ENCODE measurements at regions of chr15 and their contacts with region 1.

Region 1: DNA sequence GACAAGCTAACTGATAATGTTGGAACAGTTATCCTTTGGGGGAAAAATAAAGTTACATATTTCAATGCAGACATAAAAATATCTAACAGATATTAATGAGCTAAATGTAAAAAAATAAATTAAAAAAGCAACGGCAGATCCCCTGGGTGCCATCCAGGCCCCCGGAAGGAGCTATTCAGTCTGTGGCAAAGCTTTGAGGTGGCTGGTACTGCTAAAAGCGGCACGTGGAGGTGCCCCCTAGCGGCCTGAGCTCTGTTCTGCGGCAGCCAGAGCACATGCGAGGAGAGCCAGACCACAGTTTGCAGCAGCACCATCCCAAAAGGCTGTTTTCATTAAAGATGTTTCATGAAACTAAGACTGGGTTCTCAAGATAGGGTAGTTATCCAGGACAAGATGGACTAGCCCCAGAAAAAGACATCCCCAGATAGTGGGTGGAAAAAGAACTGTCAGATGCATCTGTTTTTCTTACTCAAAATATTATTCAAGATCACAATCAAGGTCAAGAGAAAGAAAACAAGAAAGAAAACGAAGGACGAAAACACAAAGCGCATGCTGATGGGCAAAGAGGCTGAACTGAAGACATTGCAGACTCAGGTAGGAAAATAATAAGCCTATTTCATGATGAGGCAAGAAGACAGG is 18.7 kb downstream of the AP3S2 start:
- DNase-seq: peak; percentile 67 to 75 (median 74)
- H3K4me3 ChIP-seq: no peak overlapping the region
- H3K4me3 Mint-ChIP-seq: no peak overlapping the region
- H3K27ac ChIP-seq: no peak overlapping the region
- H3K27ac Mint-ChIP-seq: peak overlapping the region in 6 of 7 donors; percentile 1 to 59 (median 29)
- H3K4me1 ChIP-seq: no peaks in the 10 kb centered on the region
- H3K4me1 Mint-ChIP-seq: peaks cover 4 to 7% (median 5%) of the 10 kb centered on the region in 4 donors
- H3K27me3 ChIP-seq: no peaks in the 10 kb centered on the region
- H3K27me3 Mint-ChIP-seq: no peaks in the 10 kb centered on the region

Region 2: DNA sequence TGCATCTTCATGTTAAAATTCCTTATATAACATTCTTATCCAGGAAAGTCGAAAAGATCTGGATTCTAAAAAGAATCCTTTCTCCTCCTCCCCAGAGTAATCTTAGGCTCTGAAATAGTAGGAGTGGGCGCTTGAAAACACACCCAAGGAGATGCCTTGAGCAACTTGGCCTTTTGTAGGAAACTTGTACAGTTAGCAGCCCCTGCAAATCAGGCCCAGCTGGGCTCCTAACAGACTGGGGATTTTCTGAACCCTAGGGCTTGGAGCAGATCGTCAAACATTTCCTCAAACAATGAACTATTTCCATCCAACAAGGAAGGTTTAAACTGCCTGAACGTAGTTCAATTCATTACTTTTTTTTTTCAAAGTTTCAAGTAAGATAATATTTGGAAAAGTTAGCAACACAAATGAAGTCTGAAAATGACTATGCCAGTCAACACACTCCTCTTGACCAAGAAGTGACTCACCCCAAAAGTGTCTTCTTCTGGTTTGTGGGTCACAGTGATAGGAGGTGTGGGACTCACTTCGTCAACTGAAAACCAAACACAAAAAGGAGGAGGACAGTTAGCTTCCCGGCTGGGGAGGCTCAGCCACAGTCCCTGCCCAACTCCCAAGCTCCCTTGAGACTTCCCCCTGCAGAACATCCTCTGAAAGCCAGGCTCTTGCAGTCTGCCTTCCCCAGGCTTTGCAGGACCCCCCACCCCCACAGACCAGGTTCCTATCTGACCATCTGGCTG is 1748.2 kb before region 1 on chr15:
- CTCF ChIA-PET with region 1: no interaction called
- POLR2A ChIA-PET with region 1: no interaction called
- intact Hi-C with region 1: no loop called
- DNase-seq: no peak
- H3K4me3 ChIP-seq: no peak overlapping the region
- H3K4me3 Mint-ChIP-seq: no peak overlapping the region
- H3K27ac ChIP-seq: no peak overlapping the region
- H3K27ac Mint-ChIP-seq: no peak overlapping the region
- H3K4me1 ChIP-seq: no peaks in the 10 kb centered on the region
- H3K4me1 Mint-ChIP-seq: no peaks in the 10 kb centered on the region
- H3K27me3 ChIP-seq: no peaks in the 10 kb centered on the region
- H3K27me3 Mint-ChIP-seq: peaks cover 3 to 4% of the 10 kb centered on the region in 2 donors

Region 3: GRCh38 chr15:89500397-89501270 is 374.4 kb before region 1 on chr15:
- CTCF ChIA-PET with region 1: no interaction called
- POLR2A ChIA-PET with region 1: no interaction called
- intact Hi-C with region 1: no loop called
- DNase-seq: no peak
- H3K4me3 ChIP-seq: no peak overlapping the region
- H3K4me3 Mint-ChIP-seq: no peak overlapping the region
- H3K27ac ChIP-seq: no peak overlapping the region
- H3K27ac Mint-ChIP-seq: no peak overlapping the region
- H3K4me1 ChIP-seq: no peaks in the 10 kb centered on the region
- H3K4me1 Mint-ChIP-seq: peaks cover 3 to 12% (median 6%) of the 10 kb centered on the region in 4 donors
- H3K27me3 ChIP-seq: peaks cover 19% of the 10 kb centered on the region
- H3K27me3 Mint-ChIP-seq: peaks cover 28 to 48% of the 10 kb centered on the region in 2 donors

Region 4: GRCh38 chr15:89750560-89751542 is 124.2 kb before region 1 on chr15 and contains the start of gene MESP1:
- CTCF ChIA-PET with region 1: interaction called, 11 read pairs
- POLR2A ChIA-PET with region 1: no interaction called
- intact Hi-C with region 1: no loop called
- DNase-seq: peak; percentile 80 to 86 (median 86)
- H3K4me3 ChIP-seq: peak within 1 kb of the TSS in 1 of 2 donors; percentile 58
- H3K4me3 Mint-ChIP-seq: peak within 1 kb of the TSS; percentile 68 to 83 (median 76)
- H3K27ac ChIP-seq: peak within 1 kb of the TSS; percentile 27
- H3K27ac Mint-ChIP-seq: peak within 1 kb of the TSS in 1 of 7 donors; percentile 35
- H3K4me1 ChIP-seq: peaks cover 9% of the 10 kb centered on the region
- H3K4me1 Mint-ChIP-seq: peaks cover 0 to 6% (median 0%) of the 10 kb centered on the region in 4 donors
- H3K27me3 ChIP-seq: no peaks in the 10 kb centered on the region
- H3K27me3 Mint-ChIP-seq: peaks cover 3 to 8% of the 10 kb centered on the region in 2 donors
- total RNA-seq, gene MESP1: 0.53 to 0.79 TPM

Region 5: GRCh38 chr15:89828241-89829082 is 46.6 kb before region 1 on chr15:
- CTCF ChIA-PET with region 1: no interaction called
- POLR2A ChIA-PET with region 1: no interaction called
- intact Hi-C with region 1: no loop called
- DNase-seq: no peak
- H3K4me3 ChIP-seq: no peak overlapping the region
- H3K4me3 Mint-ChIP-seq: no peak overlapping the region
- H3K27ac ChIP-seq: no peak overlapping the region
- H3K27ac Mint-ChIP-seq: no peak overlapping the region
- H3K4me1 ChIP-seq: no peaks in the 10 kb centered on the region
- H3K4me1 Mint-ChIP-seq: peaks cover 0 to 4% (median 0%) of the 10 kb centered on the region in 4 donors
- H3K27me3 ChIP-seq: no peaks in the 10 kb centered on the region
- H3K27me3 Mint-ChIP-seq: no peaks in the 10 kb centered on the region

Region 6: GRCh38 chr15:89863918-89864317 is 11.1 kb before region 1 on chr15:
- CTCF ChIA-PET with region 1: interaction called, 48 read pairs
- POLR2A ChIA-PET with region 1: interaction called, 4 read pairs
- intact Hi-C with region 1: no loop called
- DNase-seq: no peak
- H3K4me3 ChIP-seq: no peak overlapping the region
- H3K4me3 Mint-ChIP-seq: no peak overlapping the region
- H3K27ac ChIP-seq: no peak overlapping the region
- H3K27ac Mint-ChIP-seq: no peak overlapping the region
- H3K4me1 ChIP-seq: no peaks in the 10 kb centered on the region
- H3K4me1 Mint-ChIP-seq: peaks cover 0 to 3% (median under 1%) of the 10 kb centered on the region in 4 donors
- H3K27me3 ChIP-seq: no peaks in the 10 kb centered on the region
- H3K27me3 Mint-ChIP-seq: no peaks in the 10 kb centered on the region

Region 7: DNA sequence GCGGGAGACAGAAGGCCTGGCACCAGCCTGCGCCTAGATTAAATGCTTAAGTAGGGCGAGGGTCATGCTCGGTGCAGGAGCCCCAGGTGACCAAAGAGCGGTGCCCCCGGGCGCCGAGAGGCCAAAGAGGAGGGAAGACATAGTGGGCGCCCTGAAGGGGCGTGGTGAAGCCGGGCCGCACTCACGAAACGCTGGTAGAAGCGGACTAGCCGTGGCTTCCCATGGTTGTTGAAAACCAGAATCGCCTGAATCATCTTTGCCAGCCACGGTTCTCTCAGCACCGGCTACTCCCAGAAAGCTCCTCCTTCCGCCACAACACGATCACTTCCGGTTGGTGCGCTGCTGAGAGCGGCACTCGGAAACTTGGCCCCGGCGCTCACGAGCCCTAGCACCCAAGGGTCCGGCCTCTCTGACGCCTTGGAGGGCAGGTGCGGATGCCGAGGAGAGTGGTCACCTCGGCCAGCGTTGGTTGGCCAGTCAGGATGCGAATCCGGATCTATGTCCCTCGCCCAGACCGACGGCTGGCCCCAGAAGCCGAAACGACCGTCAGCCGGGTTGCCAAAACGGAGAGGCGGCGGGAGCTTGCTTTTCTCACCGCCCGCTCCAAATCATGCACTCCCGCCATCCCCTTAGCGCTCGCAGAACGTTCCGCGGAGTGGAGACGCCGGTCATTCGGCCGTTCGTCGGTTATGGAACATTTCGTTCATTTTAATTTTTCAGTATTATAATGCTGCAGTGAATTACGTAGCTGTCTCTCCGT is 18.8 kb after region 1 on chr15 and contains the start of gene AP3S2:
- CTCF ChIA-PET with region 1: interaction called, 92 read pairs
- POLR2A ChIA-PET with region 1: interaction called, 11 read pairs
- intact Hi-C with region 1: no loop called
- DNase-seq: peak; percentile 85 to 90 (median 86)
- H3K4me3 ChIP-seq: peak within 1 kb of the TSS; percentile 65 to 70
- H3K4me3 Mint-ChIP-seq: peak within 1 kb of the TSS; percentile 93 to 99 (median 98)
- H3K27ac ChIP-seq: peak within 1 kb of the TSS; percentile 84
- H3K27ac Mint-ChIP-seq: peak within 1 kb of the TSS; percentile 95 to 98 (median 97)
- H3K4me1 ChIP-seq: peaks cover 34% of the 10 kb centered on the region
- H3K4me1 Mint-ChIP-seq: peaks cover 20 to 46% (median 37%) of the 10 kb centered on the region in 4 donors
- H3K27me3 ChIP-seq: no peaks in the 10 kb centered on the region
- H3K27me3 Mint-ChIP-seq: no peaks in the 10 kb centered on the region
- total RNA-seq, gene AP3S2: 34.3 to 36.6 TPM